CD4-positive, alpha-beta T cell (primary cell): ENCODE measurements at regions of chr3 and their contacts with region 1.

Region 1: GRCh38 chr3:131794766-131795388 is 239.9 kb downstream of the CPNE4 start:
- DNase-seq: peak in 5 of 14 experiments; percentile 2 to 57 (median 33)
- ATAC-seq: peak; percentile 54
- H3K4me3 ChIP-seq: no peak overlapping the region
- H3K4me3 Mint-ChIP-seq: no peak overlapping the region
- H3K27ac ChIP-seq: no peak overlapping the region
- H3K27ac Mint-ChIP-seq: no peak overlapping the region
- H3K4me1 ChIP-seq: no peaks in the 10 kb centered on the region
- H3K4me1 Mint-ChIP-seq: peaks cover 14% of the 10 kb centered on the region
- H3K27me3 ChIP-seq: no peaks in the 10 kb centered on the region
- H3K27me3 Mint-ChIP-seq: peaks cover 17% of the 10 kb centered on the region
- CTCF ChIP-seq: peak; percentile 68

Region 2: DNA sequence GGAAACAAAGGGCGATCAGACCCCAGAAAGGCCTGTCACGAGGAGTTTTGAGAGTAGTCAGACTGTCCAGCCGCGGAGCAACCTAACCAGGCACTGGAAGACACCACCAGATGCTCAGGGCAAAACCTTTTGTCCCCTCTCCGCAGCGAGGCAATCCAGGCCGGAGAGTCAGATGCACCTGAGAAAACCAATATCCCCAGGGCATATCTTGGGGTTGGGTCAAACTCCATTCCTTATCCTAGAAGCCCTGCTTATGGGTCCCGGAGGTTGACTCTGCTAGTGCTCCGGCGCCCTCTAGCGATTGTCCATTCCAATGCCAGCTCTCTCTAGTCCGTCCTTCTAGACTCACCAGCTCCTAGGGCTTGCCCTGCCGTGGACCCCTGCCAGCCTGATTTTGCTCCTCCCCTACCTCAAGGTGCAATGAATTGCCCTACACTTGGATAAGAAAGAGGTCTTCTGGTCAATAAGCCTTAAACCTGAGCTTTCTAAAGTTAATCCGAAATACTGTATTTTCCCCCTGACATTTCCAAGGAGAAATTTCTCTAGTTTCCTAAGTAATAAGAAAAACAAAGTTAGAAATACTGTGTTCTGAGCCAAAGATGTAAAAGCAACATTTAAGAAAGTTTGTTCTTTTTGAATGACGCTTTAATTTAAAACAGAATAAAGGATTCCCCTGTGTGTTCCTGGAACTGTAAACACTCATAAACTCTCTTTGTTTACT is 234.5 kb after region 1 on chr3:
- CTCF ChIA-PET with region 1: no interaction called
- POLR2A ChIA-PET with region 1: no interaction called
- intact Hi-C with region 1: loop called in 1 of 2 experiments (anchors 5 kb)
- DNase-seq: peak; percentile 18 to 67 (median 36)
- ATAC-seq: no peak
- H3K4me3 ChIP-seq: no peak overlapping the region
- H3K4me3 Mint-ChIP-seq: no peak overlapping the region
- H3K27ac ChIP-seq: no peak overlapping the region
- H3K27ac Mint-ChIP-seq: no peak overlapping the region
- H3K4me1 ChIP-seq: peaks cover 5% of the 10 kb centered on the region
- H3K4me1 Mint-ChIP-seq: peaks cover 3% of the 10 kb centered on the region
- H3K27me3 ChIP-seq: peaks cover 15 to 40% of the 10 kb centered on the region in 2 experiments
- H3K27me3 Mint-ChIP-seq: peaks cover 71% of the 10 kb centered on the region
- CTCF ChIP-seq: peak; percentile 49

Region 3: DNA sequence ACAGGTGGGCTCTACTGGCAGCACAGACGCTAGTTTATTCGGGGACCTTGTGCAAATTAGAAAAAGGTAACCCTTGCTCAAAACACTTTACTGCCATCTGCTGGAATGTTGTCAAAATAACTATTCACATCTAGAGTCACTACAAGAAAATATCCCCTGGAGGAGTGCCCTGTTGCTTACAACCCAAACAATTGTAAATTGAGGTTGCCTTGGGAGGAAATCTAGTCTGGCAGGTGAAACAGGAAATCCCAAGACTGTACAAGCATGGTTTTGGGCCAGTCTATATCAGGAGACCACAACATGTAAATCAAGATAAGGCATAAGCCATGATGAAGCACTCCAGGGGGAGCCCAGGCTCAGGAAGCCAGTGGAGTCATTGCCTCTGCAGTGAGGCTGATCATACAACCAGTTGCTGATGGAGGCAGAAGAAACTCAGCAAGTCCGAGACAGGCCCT is 385.5 kb after region 1 on chr3:
- CTCF ChIA-PET with region 1: no interaction called
- POLR2A ChIA-PET with region 1: no interaction called
- intact Hi-C with region 1: loop called in 1 of 2 experiments (anchors 10 kb)
- DNase-seq: peak in 3 of 14 experiments; percentile 37 to 42 (median 40)
- ATAC-seq: no peak
- H3K4me3 ChIP-seq: no peak overlapping the region
- H3K4me3 Mint-ChIP-seq: no peak overlapping the region
- H3K27ac ChIP-seq: no peak overlapping the region
- H3K27ac Mint-ChIP-seq: no peak overlapping the region
- H3K4me1 ChIP-seq: no peaks in the 10 kb centered on the region
- H3K4me1 Mint-ChIP-seq: peaks cover 5% of the 10 kb centered on the region
- H3K27me3 ChIP-seq: no peaks in the 10 kb centered on the region
- H3K27me3 Mint-ChIP-seq: peaks cover 12% of the 10 kb centered on the region
- CTCF ChIP-seq: peak; percentile 47